GM13976 (cell line): ENCODE measurements at regions of chr6 and their contacts with region 1.

Region 1: DNA sequence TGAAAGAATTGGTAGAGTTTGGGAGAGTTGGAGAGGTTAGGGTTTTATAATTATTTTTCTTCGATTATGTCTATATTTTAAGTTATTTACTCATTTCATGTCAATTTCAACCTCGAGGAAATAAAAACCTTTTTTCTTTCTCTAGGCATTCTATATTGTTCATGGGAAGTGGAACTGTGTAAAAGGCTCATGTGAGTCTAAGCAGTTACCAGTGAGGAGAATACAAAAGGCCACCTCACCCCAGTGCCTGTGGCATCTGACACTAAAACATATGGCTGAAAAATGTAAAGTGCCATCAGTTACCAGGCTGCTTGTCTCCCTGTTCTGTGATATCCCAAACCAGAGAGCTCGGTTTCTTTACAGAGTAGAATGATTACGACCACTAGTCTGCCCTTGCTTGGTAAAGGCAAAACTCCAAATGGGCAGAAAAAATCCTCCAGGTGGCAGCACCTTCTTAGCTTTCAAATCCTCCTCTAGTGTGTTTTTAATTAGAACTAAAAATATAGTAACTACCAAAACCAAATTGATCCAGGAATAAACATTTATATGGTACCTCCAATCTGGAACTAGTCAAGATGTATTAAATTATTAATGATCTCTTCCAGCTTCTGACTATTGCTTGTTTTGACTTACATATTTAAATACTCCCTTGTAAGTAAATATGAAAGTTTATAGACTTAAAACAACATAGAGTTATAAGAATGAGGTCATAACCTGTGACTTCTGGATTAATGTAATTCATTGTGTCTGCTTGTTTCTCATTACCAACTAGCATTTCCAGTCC is 122.6 kb upstream of the MCHR2 start:
- DNase-seq: peak; percentile 32
- CTCF ChIP-seq: peak; percentile 35

Region 2: DNA sequence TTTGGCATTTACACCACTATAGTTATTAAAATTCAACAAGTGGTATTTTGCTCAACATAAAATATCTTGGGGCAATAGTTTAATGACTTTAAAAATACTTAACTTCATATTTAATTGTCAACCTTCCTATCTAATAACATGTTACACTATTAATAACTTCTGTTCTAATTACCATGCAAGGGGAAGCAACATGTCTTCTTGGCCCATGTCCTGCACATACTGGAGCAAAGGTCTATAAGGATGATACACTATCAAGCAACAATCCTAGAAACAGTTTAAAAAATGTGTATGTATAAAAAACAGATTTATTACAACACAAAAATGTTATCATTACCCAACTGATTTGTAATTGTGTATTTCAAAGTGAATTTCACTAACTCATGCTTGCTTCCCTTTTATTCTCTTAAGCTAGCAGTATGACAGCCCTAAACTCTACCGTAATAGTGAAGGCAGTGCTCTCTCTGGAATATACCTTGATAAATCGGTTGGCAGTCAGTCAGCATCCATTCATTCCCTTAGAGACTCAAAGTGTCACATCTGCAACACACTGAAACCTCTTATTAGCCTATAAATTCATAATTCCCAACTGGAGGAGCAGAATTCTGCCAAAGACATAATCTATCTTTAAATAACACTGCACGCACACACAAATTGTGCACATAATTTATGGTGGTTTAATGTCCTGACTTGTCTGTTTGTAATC is 566.4 kb before region 1 on chr6:
- in situ Hi-C with region 1: no loop called
- DNase-seq: no peak
- CTCF ChIP-seq: no peak

Region 3: GRCh38 chr6:99882128-99882702 is 234.4 kb before region 1 on chr6:
- in situ Hi-C with region 1: no loop called
- DNase-seq: no peak
- CTCF ChIP-seq: no peak

Region 4: GRCh38 chr6:100479179-100480035 is 362.8 kb after region 1 on chr6:
- in situ Hi-C with region 1: loop called (anchors 10 kb)
- DNase-seq: peak; percentile 23
- CTCF ChIP-seq: peak; percentile 42

Region 5: DNA sequence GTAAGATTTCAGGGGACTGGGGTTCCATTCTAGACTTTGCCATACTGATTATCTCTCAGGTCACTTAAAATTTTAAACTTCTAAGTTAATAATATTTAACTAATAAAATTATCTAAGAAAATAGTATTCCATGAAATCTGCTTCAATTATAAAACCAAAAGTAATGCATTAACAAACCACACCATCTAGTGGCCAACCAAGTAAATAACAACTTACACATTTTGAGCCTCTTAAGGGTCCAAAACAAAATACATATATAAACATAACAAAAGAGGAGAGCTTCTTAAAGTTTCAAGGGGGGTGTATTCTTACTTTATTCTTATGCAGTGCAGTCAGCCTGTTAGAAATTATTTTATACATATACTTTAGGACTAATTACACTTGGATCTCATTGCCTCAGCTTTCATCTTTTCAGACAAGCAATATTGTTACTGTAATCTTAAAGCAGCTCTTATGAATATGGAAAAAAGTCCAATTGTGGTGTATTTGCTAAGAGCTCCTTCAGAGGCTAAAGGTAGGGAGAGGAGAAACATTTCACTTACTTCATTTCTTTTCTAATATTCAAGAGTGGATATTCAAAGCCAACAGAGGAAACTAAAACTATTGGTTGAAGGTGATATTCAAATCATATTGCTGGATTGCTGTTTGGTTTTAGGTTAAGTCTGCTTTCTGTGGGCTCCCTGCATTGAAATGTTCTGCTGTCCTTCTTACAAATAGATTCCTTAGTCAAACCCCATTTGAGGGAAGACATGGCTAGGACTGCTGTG is 547.9 kb after region 1 on chr6:
- in situ Hi-C with region 1: loop called (anchors 25 kb)
- DNase-seq: no peak
- CTCF ChIP-seq: peak; percentile 35